Naive thymus-derived CD4-positive, alpha-beta T cell (primary cell): ENCODE measurements at regions of chr1 and their contacts with region 1.

Region 1: GRCh38 chr1:11805447-11806306 is at the starts of genes CLCN6 and MTHFR:
- DNase-seq: peak; percentile 93 to 98 (median 97)
- ATAC-seq: peak; percentile 95
- H3K4me3 ChIP-seq: peak within 1 kb of the TSS; percentile 86
- H3K4me3 Mint-ChIP-seq: peak within 1 kb of the TSS; percentile 94 to 100 (median 98)
- H3K27ac ChIP-seq: peak within 1 kb of the TSS; percentile 92
- H3K27ac Mint-ChIP-seq: peak within 1 kb of the TSS; percentile 94 to 99 (median 96)
- H3K4me1 ChIP-seq: peaks cover 39 to 40% of the 10 kb centered on the region in 2 donors
- H3K4me1 Mint-ChIP-seq: peaks cover 37 to 72% (median 60%) of the 10 kb centered on the region in 7 donors
- H3K27me3 ChIP-seq: no peaks in the 10 kb centered on the region
- H3K27me3 Mint-ChIP-seq: no peaks in the 10 kb centered on the region
- total RNA-seq, gene CLCN6: 13.3 to 23.0 (median 20.9) TPM
- total RNA-seq, gene MTHFR: 31.0 to 64.4 (median 55.2) TPM

Region 2: DNA sequence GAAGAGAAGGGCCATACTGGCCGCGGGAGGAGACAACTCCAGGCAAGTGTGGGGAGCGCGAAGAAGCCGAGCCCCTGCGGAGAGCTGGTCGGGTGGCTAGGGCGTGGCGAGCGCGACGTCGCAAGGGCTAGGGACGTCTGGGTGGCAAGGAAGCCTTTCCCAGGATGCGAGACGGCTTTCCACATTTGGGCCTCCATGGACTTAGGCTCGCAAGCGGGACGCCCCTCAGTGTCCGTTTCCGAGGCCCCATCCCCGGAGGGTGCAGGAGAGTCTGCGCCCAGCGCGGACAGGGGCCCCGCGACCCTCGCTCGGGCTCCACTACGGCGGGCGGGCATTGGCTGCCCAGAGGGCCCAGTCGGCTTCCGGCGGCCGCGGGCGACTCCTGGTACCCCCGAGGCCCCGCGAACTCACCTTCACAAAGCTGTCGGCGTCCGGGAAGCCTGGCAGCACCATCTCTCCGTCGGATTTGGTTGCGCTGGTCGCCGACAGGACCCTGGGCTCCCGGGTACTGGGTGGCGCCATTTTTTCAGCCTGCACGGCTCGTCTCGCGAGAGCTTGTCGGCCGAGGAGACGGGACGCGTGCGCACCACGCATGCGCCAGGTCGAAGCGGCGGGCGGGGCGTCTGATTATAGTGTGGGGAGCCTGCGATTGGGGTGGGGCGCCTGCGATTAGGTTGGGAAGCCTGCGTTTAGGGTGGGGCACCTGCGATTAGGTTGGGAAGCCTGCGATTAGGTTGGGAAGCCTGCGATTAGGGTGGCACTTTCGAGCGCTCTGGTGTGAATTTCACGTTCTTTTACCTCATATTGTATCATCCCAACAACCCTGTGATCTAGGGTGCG is 706.1 kb before region 1 on chr1 and contains the start of gene EXOSC10:
- CTCF ChIA-PET with region 1: no interaction called
- POLR2A ChIA-PET with region 1: no interaction called
- intact Hi-C with region 1: loop called in 1 of 2 experiments (anchors 10 kb)
- DNase-seq: peak; percentile 90 to 97 (median 95)
- ATAC-seq: peak; percentile 99
- H3K4me3 ChIP-seq: peak within 1 kb of the TSS; percentile 74
- H3K4me3 Mint-ChIP-seq: peak within 1 kb of the TSS; percentile 87 to 99 (median 96)
- H3K27ac ChIP-seq: peak within 1 kb of the TSS; percentile 88
- H3K27ac Mint-ChIP-seq: peak within 1 kb of the TSS; percentile 91 to 97 (median 95)
- H3K4me1 ChIP-seq: peaks cover 3 to 4% of the 10 kb centered on the region in 2 donors
- H3K4me1 Mint-ChIP-seq: peaks cover 6 to 27% (median 20%) of the 10 kb centered on the region in 7 donors
- H3K27me3 ChIP-seq: no peaks in the 10 kb centered on the region
- H3K27me3 Mint-ChIP-seq: no peaks in the 10 kb centered on the region
- total RNA-seq, gene EXOSC10: 72.0 to 83.4 (median 80.9) TPM

Region 3: GRCh38 chr1:11272832-11273594 is 532.7 kb before region 1 on chr1 and contains the start of gene UBIAD1:
- CTCF ChIA-PET with region 1: no interaction called
- POLR2A ChIA-PET with region 1: no interaction called
- intact Hi-C with region 1: loop called in 1 of 2 experiments (anchors 2 kb)
- DNase-seq: peak; percentile 66 to 84 (median 72)
- ATAC-seq: peak; percentile 93
- H3K4me3 ChIP-seq: peak within 1 kb of the TSS; percentile 71
- H3K4me3 Mint-ChIP-seq: peak within 1 kb of the TSS; percentile 84 to 99 (median 96)
- H3K27ac ChIP-seq: peak within 1 kb of the TSS; percentile 97
- H3K27ac Mint-ChIP-seq: peak within 1 kb of the TSS; percentile 90 to 96 (median 92)
- H3K4me1 ChIP-seq: peaks cover 21 to 30% of the 10 kb centered on the region in 2 donors
- H3K4me1 Mint-ChIP-seq: peaks cover 23 to 41% (median 32%) of the 10 kb centered on the region in 7 donors
- H3K27me3 ChIP-seq: no peaks in the 10 kb centered on the region
- H3K27me3 Mint-ChIP-seq: peaks cover 0 to 6% (median 0%) of the 10 kb centered on the region in 5 donors
- total RNA-seq, gene UBIAD1: 21.7 to 41.7 (median 32.9) TPM

Region 4: DNA sequence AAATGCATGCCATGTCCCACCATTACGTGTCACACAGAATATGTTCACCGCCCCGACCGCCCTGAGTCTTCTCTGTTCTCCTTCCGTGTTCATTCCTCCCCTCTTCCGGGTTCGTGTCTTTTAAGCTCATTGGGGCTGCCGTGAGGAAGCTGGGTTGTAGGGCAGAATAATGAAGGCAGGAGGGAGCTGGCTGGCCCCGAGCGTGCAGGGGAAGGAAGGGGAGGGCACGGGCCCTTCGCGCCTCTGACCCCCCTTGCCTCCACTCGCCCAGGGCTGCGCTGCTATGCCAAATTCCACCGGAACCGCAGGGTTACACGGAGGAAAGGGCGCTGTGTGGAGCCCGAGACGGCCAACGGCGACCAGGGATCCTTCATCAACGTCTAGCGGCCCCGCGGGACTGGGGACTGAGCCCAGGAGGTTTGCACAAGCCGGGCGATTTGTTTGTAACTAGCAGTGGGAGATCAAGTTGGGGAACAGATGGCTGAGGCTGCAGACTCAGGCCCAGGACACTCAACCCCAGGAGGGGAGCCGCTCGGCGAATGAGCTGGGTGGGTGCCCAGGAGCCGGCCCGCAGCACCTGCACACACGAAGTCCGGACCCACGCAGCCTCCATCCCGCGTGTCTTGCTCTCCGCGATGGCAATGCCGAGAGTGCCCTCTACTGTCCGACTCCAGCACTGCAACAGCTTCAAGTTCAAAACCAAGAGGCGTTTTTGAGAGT is 86.2 kb before region 1 on chr1:
- CTCF ChIA-PET with region 1: interaction called, 3 read pairs
- POLR2A ChIA-PET with region 1: no interaction called
- intact Hi-C with region 1: loop called in 1 of 2 experiments (anchors 1 kb)
- DNase-seq: peak; percentile 73 to 89 (median 82)
- ATAC-seq: peak; percentile 92
- H3K4me3 ChIP-seq: peak overlapping the region; percentile 66
- H3K4me3 Mint-ChIP-seq: peak overlapping the region; percentile 71 to 89 (median 86)
- H3K27ac ChIP-seq: peak overlapping the region; percentile 62
- H3K27ac Mint-ChIP-seq: peak overlapping the region; percentile 73 to 97 (median 93)
- H3K4me1 ChIP-seq: peaks cover 0 to 5% of the 10 kb centered on the region in 2 donors
- H3K4me1 Mint-ChIP-seq: peaks cover 8 to 21% (median 15%) of the 10 kb centered on the region in 7 donors
- H3K27me3 ChIP-seq: no peaks in the 10 kb centered on the region
- H3K27me3 Mint-ChIP-seq: peaks cover 0 to 10% (median 0%) of the 10 kb centered on the region in 5 donors

Region 5: DNA sequence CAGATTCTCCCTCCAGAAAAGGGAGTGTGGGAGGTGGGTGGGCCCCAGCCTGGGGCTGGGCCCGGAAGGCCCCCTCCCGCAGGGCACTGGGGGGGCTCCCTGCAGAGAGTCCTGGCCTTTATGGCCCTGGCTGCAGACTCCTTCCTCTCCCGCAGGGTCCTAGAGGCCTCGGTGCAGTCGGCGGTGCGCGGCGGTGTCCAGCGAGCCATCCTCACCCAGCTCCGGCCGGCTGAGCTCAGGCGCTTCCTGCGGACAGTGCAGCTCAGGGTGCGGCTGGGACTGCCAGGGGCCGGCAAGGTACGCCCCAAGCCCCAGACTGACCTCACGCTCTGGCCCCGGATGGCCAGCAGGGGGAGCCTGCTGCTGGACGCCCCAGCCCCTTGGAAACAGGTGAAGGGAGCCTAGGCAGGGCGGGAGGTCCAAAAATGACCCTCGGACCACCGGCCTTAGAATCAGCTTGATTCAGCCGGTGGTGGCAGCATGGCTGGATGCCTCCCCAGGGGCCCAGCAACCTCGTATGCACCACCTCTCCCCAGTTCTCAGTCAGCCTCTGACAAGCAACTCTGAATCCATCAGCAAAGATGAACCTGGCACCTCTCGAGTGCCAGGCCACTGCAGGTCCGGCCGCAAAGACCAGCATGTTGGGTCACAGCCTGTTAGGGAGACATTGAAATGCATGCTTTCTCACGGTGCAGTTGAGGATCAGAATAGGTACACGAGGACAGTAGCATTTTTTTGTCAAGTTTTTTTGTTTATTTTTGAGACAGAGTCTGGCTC is 20.5 kb before region 1 on chr1:
- CTCF ChIA-PET with region 1: interaction called, 5 read pairs
- POLR2A ChIA-PET with region 1: interaction called, 4 read pairs
- intact Hi-C with region 1: loop called in 1 of 2 experiments (anchors 1 kb)
- DNase-seq: peak in 7 of 9 donors; percentile 11 to 60 (median 17)
- ATAC-seq: peak; percentile 81
- H3K4me3 ChIP-seq: peak overlapping the region; percentile 37
- H3K4me3 Mint-ChIP-seq: peak overlapping the region in 8 of 10 donors; percentile 29 to 70 (median 57)
- H3K27ac ChIP-seq: no peak overlapping the region
- H3K27ac Mint-ChIP-seq: peak overlapping the region in 3 of 9 donors; percentile 11 to 49 (median 31)
- H3K4me1 ChIP-seq: peaks cover 4 to 11% of the 10 kb centered on the region in 2 donors
- H3K4me1 Mint-ChIP-seq: peaks cover 4 to 9% (median 6%) of the 10 kb centered on the region in 7 donors
- H3K27me3 ChIP-seq: no peaks in the 10 kb centered on the region
- H3K27me3 Mint-ChIP-seq: no peaks in the 10 kb centered on the region

Region 6: GRCh38 chr1:11979851-11980675 is 174.4 kb after region 1 on chr1 and contains the start of gene MFN2:
- CTCF ChIA-PET with region 1: no interaction called
- POLR2A ChIA-PET with region 1: interaction called, 8 read pairs
- intact Hi-C with region 1: loop called (anchors 1 kb)
- DNase-seq: peak; percentile 89 to 97 (median 94)
- ATAC-seq: peak; percentile 94
- H3K4me3 ChIP-seq: peak within 1 kb of the TSS; percentile 88
- H3K4me3 Mint-ChIP-seq: peak within 1 kb of the TSS; percentile 86 to 99 (median 92)
- H3K27ac ChIP-seq: peak within 1 kb of the TSS; percentile 98
- H3K27ac Mint-ChIP-seq: peak within 1 kb of the TSS; percentile 85 to 98 (median 94)
- H3K4me1 ChIP-seq: peaks cover 9 to 22% of the 10 kb centered on the region in 2 donors
- H3K4me1 Mint-ChIP-seq: peaks cover 33 to 46% (median 41%) of the 10 kb centered on the region in 7 donors
- H3K27me3 ChIP-seq: no peaks in the 10 kb centered on the region
- H3K27me3 Mint-ChIP-seq: no peaks in the 10 kb centered on the region
- total RNA-seq, gene MFN2: 40.2 to 58.6 (median 44.8) TPM